ENCODE measurements at regions of chr12 and their contacts with region 1.

Region 1: DNA sequence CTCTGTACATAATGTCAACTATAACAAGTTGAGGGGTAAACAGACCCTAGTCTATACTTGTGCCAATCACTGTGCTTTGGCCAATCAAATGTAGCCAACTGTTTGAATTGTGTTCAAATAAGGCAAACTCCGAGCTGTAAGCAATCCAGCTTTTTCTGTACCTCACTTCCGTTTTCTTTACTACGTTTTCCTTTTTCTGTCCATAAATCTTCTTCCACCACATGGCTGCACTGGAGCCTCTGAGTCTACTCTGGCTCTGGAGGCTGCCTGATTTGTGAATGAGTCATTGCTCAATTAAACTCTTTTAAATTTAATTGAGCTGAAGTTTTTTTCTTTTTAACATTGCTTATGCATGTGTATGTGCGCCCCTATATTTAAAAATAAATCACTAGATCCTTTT is 29.7 kb downstream of the CLEC1A start:
- H3K4me3 Mint-ChIP-seq: peak overlapping the region; percentile 50
- H3K27ac Mint-ChIP-seq: peak overlapping the region; percentile 85
- H3K4me1 Mint-ChIP-seq: peaks cover 36% of the 10 kb centered on the region
- H3K27me3 Mint-ChIP-seq: no peaks in the 10 kb centered on the region

Region 2: DNA sequence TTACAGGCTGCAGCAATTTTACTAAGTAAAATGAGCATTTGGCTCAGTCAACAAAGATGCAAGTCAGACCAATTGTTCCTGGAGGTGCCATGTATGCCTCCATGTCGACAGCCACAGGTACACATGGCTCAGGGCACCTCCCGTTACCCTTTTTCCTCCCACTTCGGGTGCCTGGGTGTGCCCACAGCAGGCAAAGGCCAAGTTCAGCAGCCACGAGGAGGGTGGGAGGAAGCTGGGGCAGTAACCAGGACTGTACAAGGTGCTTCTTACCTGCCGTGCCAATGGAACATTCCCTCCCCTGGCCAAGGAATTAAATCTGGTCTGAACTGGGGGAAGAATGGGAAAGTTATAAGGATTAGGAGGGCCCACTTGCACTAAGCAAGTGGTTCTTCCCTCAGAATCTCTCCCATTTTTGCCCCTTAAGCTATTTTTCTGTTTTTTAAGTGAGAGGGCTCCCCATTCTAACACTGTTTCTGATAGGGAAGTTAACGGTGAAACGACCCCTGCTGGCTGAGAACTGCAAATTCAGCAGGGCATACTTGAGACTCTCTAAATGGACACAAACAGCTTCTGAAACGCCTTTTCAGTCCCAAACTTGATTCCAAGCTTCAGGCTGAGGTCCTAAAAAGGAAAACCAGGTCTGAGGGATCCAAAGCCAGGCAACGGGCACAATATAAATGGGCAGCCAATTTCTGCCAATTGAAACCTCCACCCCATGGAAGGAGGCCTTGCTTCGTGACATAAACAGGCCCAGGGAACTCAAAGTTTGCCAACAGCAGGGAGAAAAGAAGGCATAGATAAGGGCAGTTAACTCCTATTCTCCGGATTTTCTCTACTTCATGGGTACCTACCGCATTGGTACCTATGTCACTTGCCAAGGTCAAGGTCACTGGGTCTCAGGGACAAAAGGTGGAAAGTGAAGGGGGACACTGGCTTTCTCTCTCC is 361.0 kb before region 1 on chr12:
- intact Hi-C with region 1: no loop called
- H3K4me3 Mint-ChIP-seq: no peak overlapping the region
- H3K27ac Mint-ChIP-seq: peak overlapping the region; percentile 54
- H3K4me1 Mint-ChIP-seq: peaks cover 38% of the 10 kb centered on the region
- H3K27me3 Mint-ChIP-seq: no peaks in the 10 kb centered on the region

Region 3: DNA sequence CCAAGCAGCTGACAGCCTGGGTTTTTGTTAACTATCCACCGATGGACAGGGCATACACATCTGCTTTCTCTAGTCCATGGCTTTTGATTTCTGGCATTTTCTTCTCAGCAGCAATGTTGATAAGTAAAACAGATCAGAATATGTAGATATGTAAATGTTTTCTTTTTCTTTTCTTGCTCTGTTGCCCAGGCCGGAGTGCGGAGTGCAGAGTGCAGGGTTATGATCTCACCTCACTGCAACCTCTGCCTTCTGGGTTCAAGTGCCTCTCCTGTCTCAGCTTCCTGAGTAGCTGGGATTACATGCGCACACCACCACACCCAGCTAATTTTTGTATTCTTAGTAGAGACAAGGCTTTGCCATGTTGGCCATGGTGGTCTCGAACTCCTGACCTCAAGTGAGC is 10.7 kb before region 1 on chr12:
- intact Hi-C with region 1: loop called (anchors 1 kb)
- H3K4me3 Mint-ChIP-seq: no peak overlapping the region
- H3K27ac Mint-ChIP-seq: no peak overlapping the region
- H3K4me1 Mint-ChIP-seq: peaks cover 25% of the 10 kb centered on the region
- H3K27me3 Mint-ChIP-seq: no peaks in the 10 kb centered on the region

Region 4: GRCh38 chr12:10128686-10129085 is 59.6 kb after region 1 on chr12:
- intact Hi-C with region 1: loop called (anchors 2 kb)
- H3K4me3 Mint-ChIP-seq: peak overlapping the region; percentile 84
- H3K27ac Mint-ChIP-seq: peak overlapping the region; percentile 97
- H3K4me1 Mint-ChIP-seq: peaks cover 49% of the 10 kb centered on the region
- H3K27me3 Mint-ChIP-seq: no peaks in the 10 kb centered on the region

Region 5: GRCh38 chr12:10304161-10304574 is 235.1 kb after region 1 on chr12:
- intact Hi-C with region 1: no loop called
- H3K4me3 Mint-ChIP-seq: no peak overlapping the region
- H3K27ac Mint-ChIP-seq: no peak overlapping the region
- H3K4me1 Mint-ChIP-seq: no peaks in the 10 kb centered on the region
- H3K27me3 Mint-ChIP-seq: no peaks in the 10 kb centered on the region